ENCODE measurements at regions of chr10 and their contacts with region 1.

Region 1: GRCh38 chr10:23525406-23525805 is 86.5 kb downstream of the OTUD1 start:
- DNase-seq: no peak

Region 2: GRCh38 chr10:23314835-23315239 is 210.6 kb before region 1 on chr10:
- intact Hi-C with region 1: loop called (anchors 2 kb)
- DNase-seq: no peak

Region 3: DNA sequence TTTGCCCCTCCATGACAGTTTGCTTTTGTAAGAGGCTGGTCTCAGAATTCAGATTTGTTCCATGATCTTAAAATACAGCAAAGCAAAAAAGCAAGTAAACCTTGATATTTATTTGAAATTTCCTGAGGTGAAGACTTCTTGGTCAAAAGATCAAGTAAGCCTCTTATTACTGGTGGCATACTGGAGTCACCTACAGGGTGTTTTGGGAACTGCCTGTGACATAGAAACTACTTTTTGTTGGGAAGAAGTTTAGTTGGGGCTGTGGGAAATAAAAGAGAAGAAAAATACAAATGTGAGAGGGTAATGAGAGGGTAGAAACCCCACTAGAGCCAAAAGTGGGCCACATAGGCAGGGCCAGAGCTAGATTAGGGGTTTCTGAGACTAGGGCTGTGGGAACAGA is 131.3 kb after region 1 on chr10:
- intact Hi-C with region 1: loop called (anchors 10 kb)
- DNase-seq: no peak

Region 4: GRCh38 chr10:23694446-23694920 is 169.1 kb after region 1 on chr10:
- intact Hi-C with region 1: loop called (anchors 10 kb)
- DNase-seq: no peak

Measured in cardiac septum (tissue), 1 donor.